ENCODE measurements at regions of chr5 and their contacts with region 1.

Region 1: DNA sequence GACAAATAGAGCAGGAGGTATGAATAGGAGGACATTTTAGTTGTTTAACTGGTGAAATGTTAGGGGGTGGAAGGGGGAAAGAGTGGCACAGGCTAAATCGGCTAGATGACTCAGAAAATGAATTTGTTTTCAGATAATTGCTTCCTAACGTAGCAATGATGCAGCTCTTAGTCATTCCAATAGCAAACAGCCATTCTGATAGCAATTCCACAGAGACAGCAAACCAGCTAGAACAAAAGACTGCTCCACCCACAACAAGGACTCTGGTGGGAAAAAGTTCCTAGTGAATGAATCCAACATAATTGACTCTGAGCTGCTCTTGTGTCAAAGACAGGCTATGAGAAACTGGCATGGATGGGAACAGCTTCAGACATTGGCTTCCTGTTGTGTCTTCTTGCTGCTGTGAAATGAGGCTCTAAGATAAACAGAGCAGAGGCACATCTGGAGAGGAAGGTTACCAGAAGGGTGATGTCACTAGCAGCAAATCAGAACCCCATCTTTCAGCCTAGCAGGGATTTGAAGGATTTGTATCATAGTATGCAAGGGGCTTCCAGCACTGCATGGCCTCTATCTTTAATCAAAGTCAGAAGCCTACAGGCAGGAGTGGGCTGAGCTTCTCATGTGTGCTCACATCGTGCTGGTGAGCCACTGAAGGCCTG is 28.1 kb upstream of the F2RL1 start:
- DNase-seq: no peak

Region 2: DNA sequence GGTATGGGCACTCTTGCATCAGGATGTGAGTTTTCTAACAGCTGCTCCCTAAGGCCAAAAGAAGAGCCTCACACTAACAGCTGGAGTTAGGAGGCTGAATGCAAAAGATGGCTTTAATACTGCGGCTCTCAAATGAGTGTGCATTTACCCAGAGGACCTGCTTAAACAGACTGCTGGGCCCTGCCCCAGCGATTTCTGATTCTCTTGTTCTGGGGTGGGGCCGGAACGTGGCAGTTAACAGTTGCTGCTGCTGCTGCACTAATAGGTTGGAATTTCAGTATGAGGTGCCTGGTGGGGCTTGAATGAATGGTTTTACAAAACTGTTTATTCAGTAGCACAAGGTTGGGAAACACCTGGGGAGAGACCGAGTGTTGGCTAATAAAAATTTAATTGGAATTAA is 1427.7 kb before region 1 on chr5:
- CTCF ChIA-PET with region 1: no interaction called
- POLR2A ChIA-PET with region 1: no interaction called
- DNase-seq: no peak

Region 3: GRCh38 chr5:76805850-76806505 is 15.2 kb after region 1 on chr5:
- CTCF ChIA-PET with region 1: interaction called, 4 read pairs
- POLR2A ChIA-PET with region 1: interaction called, 14 read pairs
- DNase-seq: no peak

Region 4: DNA sequence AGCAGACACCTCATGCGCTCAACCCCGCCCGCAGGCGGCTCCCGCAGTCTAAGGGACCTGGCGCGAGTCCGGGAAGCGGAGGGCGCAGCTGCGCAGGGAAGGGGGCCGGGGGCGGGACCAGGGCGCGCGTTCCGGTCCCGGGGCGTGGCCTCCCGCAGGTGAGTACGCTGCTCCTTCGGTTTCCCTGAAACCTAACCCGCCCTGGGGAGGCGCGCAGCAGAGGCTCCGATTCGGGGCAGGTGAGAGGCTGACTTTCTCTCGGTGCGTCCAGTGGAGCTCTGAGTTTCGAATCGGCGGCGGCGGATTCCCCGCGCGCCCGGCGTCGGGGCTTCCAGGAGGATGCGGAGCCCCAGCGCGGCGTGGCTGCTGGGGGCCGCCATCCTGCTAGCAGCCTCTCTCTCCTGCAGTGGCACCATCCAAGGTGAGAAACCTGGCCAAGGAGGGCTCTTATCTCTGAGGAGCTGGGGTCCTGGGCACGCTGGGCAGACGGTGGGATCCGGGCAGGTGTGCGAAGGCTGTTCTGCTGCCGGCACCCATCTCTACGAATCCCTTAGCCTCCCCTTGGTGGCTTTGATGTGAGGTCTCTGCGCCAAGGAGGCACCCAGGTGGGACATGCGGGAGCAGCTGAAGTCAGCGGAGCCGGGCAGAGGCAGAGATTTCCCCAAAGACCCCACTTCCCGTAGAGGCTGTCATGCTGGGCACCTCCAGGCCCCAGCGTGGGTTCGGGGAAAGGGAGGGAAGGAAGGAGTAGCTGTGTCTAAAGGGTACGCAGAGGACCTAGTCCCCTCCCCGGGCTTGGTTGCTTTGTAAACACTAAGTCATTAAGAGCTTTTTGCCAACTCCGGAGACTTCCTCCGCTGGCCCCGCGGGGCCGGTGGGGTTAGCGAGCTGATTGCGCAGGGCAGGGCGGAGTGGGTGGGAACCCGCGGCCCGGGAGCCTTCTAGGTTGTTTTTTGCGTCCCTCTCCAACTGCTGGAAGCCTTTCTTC is 28.4 kb after region 1 on chr5 and contains the start of gene F2RL1:
- CTCF ChIA-PET with region 1: interaction called, 6 read pairs
- POLR2A ChIA-PET with region 1: interaction called, 11 read pairs
- DNase-seq: peak; percentile 82

Region 5: GRCh38 chr5:76831110-76831452 is 40.3 kb after region 1 on chr5:
- CTCF ChIA-PET with region 1: no interaction called
- POLR2A ChIA-PET with region 1: no interaction called
- DNase-seq: no peak

Measured in HEK293T (cell line).